ENCODE measurements at regions of chr5 and their contacts with region 1.

Region 1: GRCh38 chr5:134738133-134738962 is at the start of gene CAMLG:
- DNase-seq: peak; percentile 98
- H3K4me3 Mint-ChIP-seq: peak within 1 kb of the TSS; percentile 95
- H3K27ac Mint-ChIP-seq: peak within 1 kb of the TSS; percentile 89
- H3K4me1 Mint-ChIP-seq: peaks cover 24% of the 10 kb centered on the region
- H3K27me3 Mint-ChIP-seq: no peaks in the 10 kb centered on the region
- total RNA-seq, gene CAMLG: 40.3 to 41.2 TPM

Region 2: DNA sequence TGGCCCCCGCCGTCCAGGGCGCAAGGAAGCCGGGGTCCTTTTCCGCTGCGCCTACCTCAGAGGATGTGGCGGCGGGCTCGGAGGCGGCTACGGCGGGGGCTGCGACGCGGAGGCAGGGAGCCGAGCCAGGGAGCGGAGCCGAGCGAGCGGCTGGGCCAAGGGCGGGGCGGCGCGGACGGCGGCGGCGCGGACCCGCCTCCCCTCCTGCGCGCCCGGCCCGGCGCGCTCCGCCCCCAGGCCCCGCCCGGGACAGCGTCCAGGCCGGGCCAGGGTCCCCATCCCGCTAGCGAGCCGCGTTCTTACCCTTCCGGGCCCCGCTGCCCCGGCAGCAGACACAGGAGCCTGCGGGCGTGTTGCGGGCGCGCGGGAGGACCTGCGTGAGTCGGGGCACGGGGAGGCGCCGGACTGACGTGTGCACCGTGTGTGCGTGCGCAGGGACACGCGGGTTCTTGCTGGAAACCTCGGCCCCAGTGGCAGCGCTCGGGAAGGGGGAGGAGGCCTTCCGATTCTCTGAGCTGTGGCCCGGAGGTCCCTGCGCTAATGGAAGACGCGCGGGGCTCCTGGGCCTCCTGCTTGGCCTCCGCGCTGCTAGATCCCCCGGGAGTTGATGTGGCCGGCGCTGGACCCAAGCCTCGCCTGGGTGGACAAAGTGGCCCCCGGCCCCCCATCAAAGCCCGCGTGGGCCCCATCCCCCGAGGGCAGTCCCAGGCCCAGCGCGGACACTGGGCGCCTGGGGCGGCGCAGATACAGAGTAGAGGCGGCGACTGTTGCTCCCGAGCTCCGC is 733.6 kb before region 1 on chr5 and contains the start of gene VDAC1:
- CTCF ChIA-PET with region 1: no interaction called
- POLR2A ChIA-PET with region 1: no interaction called
- intact Hi-C with region 1: loop called (anchors 10 kb)
- DNase-seq: peak; percentile 85
- H3K4me3 Mint-ChIP-seq: peak within 1 kb of the TSS; percentile 90
- H3K27ac Mint-ChIP-seq: peak within 1 kb of the TSS; percentile 97
- H3K4me1 Mint-ChIP-seq: peaks cover 37% of the 10 kb centered on the region
- H3K27me3 Mint-ChIP-seq: no peaks in the 10 kb centered on the region
- total RNA-seq, gene VDAC1: 407 to 416 TPM

Region 3: GRCh38 chr5:134370871-134371833 is 367.2 kb before region 1 on chr5 and contains the start of gene UBE2B:
- CTCF ChIA-PET with region 1: interaction called, 3 read pairs
- POLR2A ChIA-PET with region 1: no interaction called
- intact Hi-C with region 1: loop called (anchors 2 kb)
- DNase-seq: peak; percentile 98
- H3K4me3 Mint-ChIP-seq: peak within 1 kb of the TSS; percentile 92
- H3K27ac Mint-ChIP-seq: peak within 1 kb of the TSS; percentile 96
- H3K4me1 Mint-ChIP-seq: peaks cover 55% of the 10 kb centered on the region
- H3K27me3 Mint-ChIP-seq: peaks cover 2% of the 10 kb centered on the region
- total RNA-seq, gene UBE2B: 124 TPM

Region 4: GRCh38 chr5:134648425-134649162 is 89.8 kb before region 1 on chr5 and contains the start of gene SEC24A:
- CTCF ChIA-PET with region 1: no interaction called
- POLR2A ChIA-PET with region 1: interaction called, 3 read pairs
- intact Hi-C with region 1: loop called (anchors 1 kb)
- DNase-seq: peak; percentile 95
- H3K4me3 Mint-ChIP-seq: peak within 1 kb of the TSS; percentile 81
- H3K27ac Mint-ChIP-seq: peak within 1 kb of the TSS; percentile 99
- H3K4me1 Mint-ChIP-seq: peaks cover 22% of the 10 kb centered on the region
- H3K27me3 Mint-ChIP-seq: no peaks in the 10 kb centered on the region
- total RNA-seq, gene SEC24A: 30.8 to 31.4 TPM

Region 5: GRCh38 chr5:134845852-134846640 is 107.7 kb after region 1 on chr5 and contains the start of gene C5orf24:
- CTCF ChIA-PET with region 1: interaction called, 6 read pairs
- POLR2A ChIA-PET with region 1: interaction called, 6 read pairs
- intact Hi-C with region 1: loop called (anchors 1 kb)
- DNase-seq: peak; percentile 96
- H3K4me3 Mint-ChIP-seq: peak within 1 kb of the TSS; percentile 86
- H3K27ac Mint-ChIP-seq: peak within 1 kb of the TSS; percentile 96
- H3K4me1 Mint-ChIP-seq: peaks cover 28% of the 10 kb centered on the region
- H3K27me3 Mint-ChIP-seq: no peaks in the 10 kb centered on the region
- total RNA-seq, gene C5orf24: 21.9 to 25.2 TPM

Region 6: DNA sequence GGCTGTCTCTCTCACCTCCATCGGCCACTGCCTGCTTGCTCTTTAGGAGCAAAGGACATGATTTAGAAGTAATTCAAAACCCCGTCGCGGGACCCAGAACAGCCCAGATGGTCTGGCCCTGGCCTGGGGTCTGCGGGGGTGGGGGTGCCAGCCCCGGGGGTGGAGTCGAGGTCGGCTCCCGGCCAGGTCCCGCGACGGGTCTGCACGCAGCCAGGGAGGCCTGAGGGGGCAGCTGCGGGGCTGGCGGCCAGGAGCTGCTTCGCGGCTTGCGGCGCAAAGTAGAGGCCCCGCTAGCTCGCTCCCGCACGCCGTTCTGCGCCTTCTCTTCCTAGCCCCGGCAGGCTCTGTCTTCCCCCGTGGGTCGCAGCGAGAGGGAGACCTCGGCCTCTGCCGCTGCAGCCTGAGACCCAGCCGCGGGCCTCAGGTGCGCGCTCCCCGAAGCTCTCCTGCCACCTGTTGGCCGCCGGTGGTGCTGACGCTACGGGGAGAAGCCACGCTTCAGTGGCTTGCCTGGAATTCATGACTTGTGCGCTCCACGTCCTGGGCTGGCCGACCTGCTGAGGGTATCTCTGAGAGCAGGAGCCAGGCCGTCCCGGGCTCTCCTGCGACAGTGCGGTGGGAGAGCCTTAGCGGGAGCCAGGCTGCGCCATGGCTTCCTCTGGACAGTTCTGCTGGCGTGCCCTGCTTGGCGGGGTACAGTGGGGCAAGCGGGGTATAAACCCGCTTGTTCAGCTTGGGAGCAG is 452.9 kb after region 1 on chr5:
- CTCF ChIA-PET with region 1: no interaction called
- POLR2A ChIA-PET with region 1: no interaction called
- intact Hi-C with region 1: loop called (anchors 5 kb)
- DNase-seq: peak; percentile 83
- H3K4me3 Mint-ChIP-seq: peak overlapping the region; percentile 59
- H3K27ac Mint-ChIP-seq: no peak overlapping the region
- H3K4me1 Mint-ChIP-seq: peaks cover 7% of the 10 kb centered on the region
- H3K27me3 Mint-ChIP-seq: peaks cover 35% of the 10 kb centered on the region